Lower leg skin (tissue), 4 donors: ENCODE measurements at regions of chr21 and their contacts with region 1.

Region 1: GRCh38 chr21:35041122-35041521 is 8.0 kb downstream of the RUNX1 start:
- DNase-seq: peak in 1 of 2 donors; percentile 5
- H3K4me3 ChIP-seq: no peak overlapping the region
- CTCF ChIP-seq: no peak
- POLR2A ChIP-seq: no peak

Region 2: DNA sequence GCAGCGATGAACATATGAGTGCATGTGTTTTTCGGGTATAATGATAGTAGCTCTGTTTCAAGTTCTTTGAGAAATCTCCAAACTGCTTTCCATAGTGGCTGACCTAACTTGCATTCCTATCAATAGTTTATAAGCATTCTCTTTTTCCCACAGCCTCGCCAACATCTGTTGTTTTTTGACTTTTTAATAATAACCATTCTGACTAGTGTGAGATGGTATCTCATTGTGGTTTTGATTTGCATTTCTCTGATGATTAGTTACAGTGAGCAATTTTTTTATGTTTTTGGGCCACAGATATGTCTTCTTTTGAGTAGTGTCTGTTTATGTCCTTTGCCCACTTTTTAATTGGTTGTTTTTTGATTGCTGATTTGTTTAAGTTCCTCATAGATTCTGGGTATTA is 18.6 kb after region 1 on chr21:
- intact Hi-C with region 1: loop called (anchors 1 kb)
- DNase-seq: no peak
- H3K4me3 ChIP-seq: no peak overlapping the region
- CTCF ChIP-seq: no peak
- POLR2A ChIP-seq: no peak

Region 3: GRCh38 chr21:35095859-35096291 is 54.8 kb after region 1 on chr21:
- intact Hi-C with region 1: no loop called
- DNase-seq: no peak
- H3K4me3 ChIP-seq: no peak overlapping the region
- CTCF ChIP-seq: no peak
- POLR2A ChIP-seq: no peak